PC-9 (cell line): ENCODE measurements at regions of chr16 and their contacts with region 1.

Region 1: GRCh38 chr16:70380861-70381603 is 34.3 kb downstream of the DDX19A start:
- DNase-seq: peak; percentile 94 to 96
- H3K4me3 ChIP-seq: peak overlapping the region; percentile 100
- H3K27ac ChIP-seq: peak overlapping the region; percentile 86
- H3K4me1 ChIP-seq: peaks cover 10% of the 10 kb centered on the region
- H3K27me3 ChIP-seq: no peaks in the 10 kb centered on the region
- CTCF ChIP-seq: peak; percentile 50

Region 2: DNA sequence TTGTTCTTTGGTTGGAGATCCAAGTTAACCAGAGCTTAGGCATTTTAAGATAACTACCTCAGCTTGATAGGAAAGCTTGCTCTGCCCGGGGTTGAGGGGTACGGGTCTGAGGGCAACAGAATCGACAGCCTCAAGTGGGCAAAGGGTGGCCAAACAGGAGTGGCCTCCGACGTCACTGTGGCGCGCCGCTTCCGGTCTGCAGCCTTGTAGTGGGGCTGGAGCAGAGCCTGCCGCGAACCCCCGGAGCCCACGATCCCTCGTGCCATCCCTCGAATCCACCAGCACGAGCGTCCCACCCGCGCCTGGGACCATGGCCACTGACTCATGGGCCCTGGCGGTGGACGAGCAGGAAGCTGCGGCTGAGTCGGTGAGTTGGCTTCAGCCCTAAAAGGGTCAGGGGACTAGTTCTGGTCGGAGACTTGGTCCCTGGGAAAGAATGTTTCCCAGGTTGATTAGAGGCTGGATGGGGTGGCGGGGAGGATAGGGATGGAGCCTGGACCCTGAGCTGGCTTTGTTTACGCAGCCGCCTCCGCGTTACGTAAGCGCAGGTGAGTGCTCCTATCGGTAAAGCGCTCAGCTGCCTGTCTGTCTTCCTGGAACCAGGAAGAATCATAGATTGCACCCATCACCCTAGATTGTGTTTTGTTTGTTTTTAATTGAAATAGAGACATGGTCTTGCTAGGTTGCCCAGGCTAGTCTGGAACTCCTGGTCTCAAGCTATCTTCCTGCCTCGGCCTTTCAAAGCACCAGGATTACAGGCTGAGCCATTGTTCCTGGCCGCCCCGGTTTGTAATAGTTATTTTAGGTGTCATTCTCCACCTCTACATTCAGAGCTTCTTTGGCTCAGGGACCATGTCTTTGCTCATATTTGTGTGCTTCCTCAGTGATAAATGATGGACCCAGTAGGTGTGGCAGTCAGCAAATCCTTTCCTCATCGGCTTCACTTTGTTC is 81.8 kb before region 1 on chr16 and contains the start of gene DDX19B:
- CTCF ChIA-PET with region 1: no interaction called
- POLR2A ChIA-PET with region 1: interaction called, 13 read pairs
- intact Hi-C with region 1: no loop called
- DNase-seq: peak; percentile 58 to 61
- H3K4me3 ChIP-seq: peak within 1 kb of the TSS; percentile 85
- H3K27ac ChIP-seq: peak within 1 kb of the TSS; percentile 85
- H3K4me1 ChIP-seq: peaks cover 16% of the 10 kb centered on the region; the same call in 1 of the 2 replicates
- H3K27me3 ChIP-seq: no peaks in the 10 kb centered on the region
- CTCF ChIP-seq: no peak
- total RNA-seq, gene DDX19B: 40.1 and 42.1 TPM in 2 replicates

Region 3: DNA sequence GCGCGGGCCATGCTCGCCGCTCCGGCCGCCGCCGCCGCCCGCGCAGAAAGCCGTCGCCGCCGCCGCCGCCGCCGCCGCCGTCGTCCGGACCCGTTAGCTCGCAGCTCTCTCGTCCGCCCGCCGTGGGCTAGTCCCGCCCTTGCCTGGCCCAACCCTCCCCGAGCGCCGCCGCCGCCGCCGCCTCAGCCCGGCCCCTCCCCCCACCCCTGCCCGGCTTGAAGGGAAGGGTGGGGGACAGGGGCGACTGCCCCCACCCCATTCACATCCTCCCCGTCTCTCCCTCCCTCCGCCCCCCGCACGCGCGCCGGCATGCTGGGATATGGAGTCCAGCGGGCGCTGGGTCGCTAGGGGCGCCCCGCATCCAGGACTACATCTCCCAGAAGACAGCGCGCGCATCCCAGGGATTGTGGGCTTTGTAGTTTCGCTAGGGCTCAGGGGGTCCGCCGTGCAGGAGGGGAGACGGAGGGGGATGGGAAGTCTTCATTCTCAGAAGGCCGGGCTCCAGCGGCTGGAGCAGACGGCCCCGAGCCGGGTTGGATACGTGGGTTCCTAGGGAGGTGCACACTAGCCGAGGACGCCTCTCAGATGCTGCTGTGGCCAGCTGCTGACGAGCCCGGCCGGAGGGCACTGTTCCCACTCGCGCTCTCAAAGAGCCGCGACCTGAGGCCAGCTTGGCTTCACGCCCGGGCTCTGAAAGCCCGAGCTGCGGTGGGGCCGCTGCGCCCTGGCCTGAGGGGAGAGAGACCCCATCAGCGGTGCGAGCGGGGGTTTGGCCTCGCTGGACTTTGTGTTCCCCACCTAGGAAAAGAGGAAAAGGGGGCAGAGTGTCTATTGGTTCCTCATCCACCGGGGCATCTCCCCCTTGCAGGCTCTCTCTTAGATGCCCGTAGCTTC is 58.2 kb after region 1 on chr16 and contains the start of gene ST3GAL2:
- CTCF ChIA-PET with region 1: no interaction called
- POLR2A ChIA-PET with region 1: no interaction called
- intact Hi-C with region 1: loop called (anchors 1 kb)
- DNase-seq: peak; percentile 55 to 86
- H3K4me3 ChIP-seq: peak within 1 kb of the TSS; percentile 55
- H3K27ac ChIP-seq: no peak within 1 kb of the TSS
- H3K4me1 ChIP-seq: 0 out of 2 replicates have a peak, but pooled peaks cover 6% of the 10 kb centered on the region
- H3K27me3 ChIP-seq: no peaks in the 10 kb centered on the region
- CTCF ChIP-seq: no peak
- total RNA-seq, gene ST3GAL2: 9.7 and 13.7 TPM in 2 replicates

Region 4: DNA sequence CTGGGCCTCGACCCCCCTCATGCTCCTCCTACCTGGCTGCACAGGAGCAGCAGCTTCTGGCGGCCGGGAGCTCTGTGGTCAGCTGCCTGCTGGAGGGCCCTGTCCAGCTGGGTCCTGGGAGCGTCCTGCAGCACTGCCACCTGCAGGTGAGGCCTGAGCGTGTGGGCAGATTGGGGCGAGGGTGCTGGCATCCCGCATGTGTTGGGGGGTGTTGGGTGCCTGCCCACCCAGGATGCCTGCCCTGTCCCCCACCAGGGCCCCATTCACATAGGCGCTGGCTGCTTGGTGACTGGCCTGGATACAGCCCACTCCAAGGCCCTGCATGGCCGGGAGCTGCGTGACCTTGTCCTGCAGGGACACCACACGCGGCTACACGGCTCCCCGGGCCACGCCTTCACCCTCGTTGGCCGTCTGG is 89.9 kb after region 1 on chr16:
- CTCF ChIA-PET with region 1: no interaction called
- POLR2A ChIA-PET with region 1: interaction called, 8 read pairs
- intact Hi-C with region 1: loop called (anchors 1 kb)
- DNase-seq: peak in 1 of 2 experiments; percentile 37
- H3K4me3 ChIP-seq: no peak overlapping the region
- H3K27ac ChIP-seq: no peak overlapping the region
- H3K4me1 ChIP-seq: peaks cover 12% of the 10 kb centered on the region
- H3K27me3 ChIP-seq: no peaks in the 10 kb centered on the region
- CTCF ChIP-seq: peak; percentile 58

Region 5: GRCh38 chr16:71499775-71500364 is 1118.8 kb after region 1 on chr16:
- CTCF ChIA-PET with region 1: no interaction called
- POLR2A ChIA-PET with region 1: no interaction called
- intact Hi-C with region 1: no loop called
- DNase-seq: peak; percentile 40 to 56
- H3K4me3 ChIP-seq: no peak overlapping the region
- H3K27ac ChIP-seq: no peak overlapping the region
- H3K4me1 ChIP-seq: peaks cover 5% of the 10 kb centered on the region
- H3K27me3 ChIP-seq: no peaks in the 10 kb centered on the region
- CTCF ChIP-seq: peak; percentile 85